ENCODE measurements at regions of chr22 and their contacts with region 1.

Region 1: DNA sequence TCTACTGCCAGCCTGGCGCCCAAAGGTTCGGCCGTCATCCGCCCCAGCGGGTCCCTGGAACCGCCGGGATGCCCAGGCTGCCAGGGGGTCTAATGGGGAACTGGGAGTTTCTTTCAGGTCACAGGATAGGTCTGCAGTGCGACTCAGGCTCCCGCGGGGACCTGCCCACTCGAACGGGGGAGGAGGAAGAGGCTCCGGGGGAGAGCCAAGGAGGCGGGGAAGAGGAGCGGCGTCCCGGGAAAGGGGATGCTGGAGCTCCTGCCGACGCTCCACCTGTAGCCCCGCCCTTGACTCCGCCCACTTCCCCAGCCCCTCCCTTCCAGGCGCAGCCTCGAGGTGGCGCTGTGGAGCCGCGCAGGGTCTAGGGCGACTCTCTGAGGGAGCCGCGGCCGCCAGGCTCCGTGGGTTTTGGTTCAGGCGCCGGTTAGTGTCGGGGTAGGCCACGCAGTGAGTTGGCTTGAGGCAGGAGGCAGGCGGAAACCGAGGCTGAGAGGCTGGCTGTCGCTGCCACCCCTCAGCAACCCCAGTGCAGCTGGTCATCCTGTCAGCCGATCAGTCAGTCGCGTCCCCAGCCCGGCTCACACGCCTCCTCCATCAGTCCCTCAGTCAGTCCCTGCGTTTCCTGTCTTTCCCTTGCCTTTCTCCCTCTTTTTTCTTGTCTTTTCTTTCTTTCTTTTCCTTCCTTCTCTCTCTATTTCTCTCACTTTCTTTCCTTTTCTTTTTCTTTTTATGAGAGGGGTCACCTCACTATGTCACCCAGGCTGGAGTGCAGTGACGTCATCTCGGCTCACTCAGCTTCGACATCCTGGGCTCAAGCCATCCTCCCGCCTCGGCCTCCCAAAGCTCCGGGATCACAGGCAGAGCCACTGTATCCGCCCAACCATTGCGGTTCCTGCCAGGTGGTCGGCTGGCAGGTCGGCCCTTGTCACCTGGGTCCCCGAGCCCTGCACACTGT is 26.4 kb downstream of the YWHAH start:
- DNase-seq: peak; percentile 85
- H3K4me3 ChIP-seq: peak overlapping the region; percentile 45 to 60 (median 57)
- H3K27ac ChIP-seq: peak overlapping the region; percentile 17
- H3K4me1 ChIP-seq: peaks cover 5% of the 10 kb centered on the region
- H3K27me3 ChIP-seq: no peaks in the 10 kb centered on the region
- CTCF ChIP-seq: peak; percentile 70 to 99

Region 2: DNA sequence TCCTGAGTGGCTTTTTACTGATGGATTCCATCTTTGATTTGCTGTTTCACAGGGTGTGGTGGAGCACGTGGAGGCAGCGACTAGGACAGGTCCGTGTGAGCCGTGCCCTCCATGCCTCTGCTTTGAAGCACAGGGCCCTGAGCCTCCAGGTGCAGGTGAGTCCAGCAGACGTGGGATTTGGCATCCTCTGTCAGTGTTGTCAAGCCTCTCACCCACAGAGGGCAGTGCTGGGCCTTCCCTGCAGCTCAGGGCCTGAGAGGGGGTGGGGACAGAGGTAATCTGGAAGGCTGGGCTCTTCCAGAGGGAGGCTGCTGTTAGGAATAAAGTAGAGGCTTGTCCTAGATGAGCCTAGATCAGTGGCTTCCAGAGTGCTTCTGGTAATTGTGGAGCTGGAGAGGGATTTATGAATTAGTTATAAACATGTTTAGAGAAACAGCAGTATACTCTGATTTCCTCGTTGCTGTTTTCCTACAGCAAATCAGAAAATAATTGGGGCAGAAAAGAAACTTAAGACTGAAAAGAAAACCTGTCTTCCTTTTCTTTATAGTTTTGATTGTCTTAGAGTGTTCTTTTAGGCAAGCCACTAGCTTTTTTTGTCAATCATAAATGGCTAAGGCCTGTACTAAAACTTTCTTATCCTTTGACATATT is 409.4 kb before region 1 on chr22:
- CTCF ChIA-PET with region 1: interaction called, 4 read pairs
- dilution Hi-C with region 1: no loop called
- in situ Hi-C with region 1: loop called in 1 of 2 experiments (anchors 25 kb)
- intact Hi-C with region 1: loop called (anchors 1 kb)
- DNase-seq: peak; percentile 70
- H3K4me3 ChIP-seq: no peak overlapping the region
- H3K27ac ChIP-seq: no peak overlapping the region
- H3K4me1 ChIP-seq: no peaks in the 10 kb centered on the region
- H3K27me3 ChIP-seq: no peaks in the 10 kb centered on the region
- CTCF ChIP-seq: peak; percentile 76 to 94

Region 3: DNA sequence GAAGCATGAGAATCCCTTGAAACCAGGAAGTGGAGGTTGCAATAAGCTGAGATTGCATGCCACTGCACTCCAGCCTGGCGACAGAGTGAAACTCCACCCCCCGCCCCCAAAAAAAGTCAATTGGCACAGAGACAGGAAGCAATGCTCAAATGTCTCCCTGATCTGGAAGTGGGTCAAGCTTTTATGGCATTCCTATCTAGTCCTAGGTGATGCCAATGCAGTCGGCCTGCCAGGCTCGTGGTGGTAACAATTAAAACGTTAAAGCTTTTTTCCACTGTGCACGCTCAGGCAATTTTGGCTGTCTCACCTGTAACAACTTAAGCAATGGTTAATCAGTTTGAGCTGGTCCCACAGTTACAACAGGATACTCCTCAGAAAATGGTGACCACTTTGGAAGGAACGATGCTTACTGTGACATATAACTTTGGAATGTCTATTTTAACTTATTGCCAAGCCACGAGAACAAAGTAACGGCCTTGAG is 289.9 kb before region 1 on chr22:
- CTCF ChIA-PET with region 1: interaction called, 10 read pairs
- dilution Hi-C with region 1: no loop called
- in situ Hi-C with region 1: no loop called
- intact Hi-C with region 1: no loop called
- DNase-seq: peak; percentile 60
- H3K4me3 ChIP-seq: no peak overlapping the region
- H3K27ac ChIP-seq: peak overlapping the region; percentile 44
- H3K4me1 ChIP-seq: peaks cover 47% of the 10 kb centered on the region
- H3K27me3 ChIP-seq: no peaks in the 10 kb centered on the region
- CTCF ChIP-seq: no peak

Region 4: GRCh38 chr22:31802575-31802974 is 168.2 kb before region 1 on chr22:
- CTCF ChIA-PET with region 1: interaction called, 13 read pairs
- dilution Hi-C with region 1: no loop called
- in situ Hi-C with region 1: no loop called
- intact Hi-C with region 1: no loop called
- DNase-seq: no peak
- H3K4me3 ChIP-seq: no peak overlapping the region
- H3K27ac ChIP-seq: no peak overlapping the region
- H3K4me1 ChIP-seq: peaks cover 4% of the 10 kb centered on the region
- H3K27me3 ChIP-seq: no peaks in the 10 kb centered on the region
- CTCF ChIP-seq: no peak

Region 5: DNA sequence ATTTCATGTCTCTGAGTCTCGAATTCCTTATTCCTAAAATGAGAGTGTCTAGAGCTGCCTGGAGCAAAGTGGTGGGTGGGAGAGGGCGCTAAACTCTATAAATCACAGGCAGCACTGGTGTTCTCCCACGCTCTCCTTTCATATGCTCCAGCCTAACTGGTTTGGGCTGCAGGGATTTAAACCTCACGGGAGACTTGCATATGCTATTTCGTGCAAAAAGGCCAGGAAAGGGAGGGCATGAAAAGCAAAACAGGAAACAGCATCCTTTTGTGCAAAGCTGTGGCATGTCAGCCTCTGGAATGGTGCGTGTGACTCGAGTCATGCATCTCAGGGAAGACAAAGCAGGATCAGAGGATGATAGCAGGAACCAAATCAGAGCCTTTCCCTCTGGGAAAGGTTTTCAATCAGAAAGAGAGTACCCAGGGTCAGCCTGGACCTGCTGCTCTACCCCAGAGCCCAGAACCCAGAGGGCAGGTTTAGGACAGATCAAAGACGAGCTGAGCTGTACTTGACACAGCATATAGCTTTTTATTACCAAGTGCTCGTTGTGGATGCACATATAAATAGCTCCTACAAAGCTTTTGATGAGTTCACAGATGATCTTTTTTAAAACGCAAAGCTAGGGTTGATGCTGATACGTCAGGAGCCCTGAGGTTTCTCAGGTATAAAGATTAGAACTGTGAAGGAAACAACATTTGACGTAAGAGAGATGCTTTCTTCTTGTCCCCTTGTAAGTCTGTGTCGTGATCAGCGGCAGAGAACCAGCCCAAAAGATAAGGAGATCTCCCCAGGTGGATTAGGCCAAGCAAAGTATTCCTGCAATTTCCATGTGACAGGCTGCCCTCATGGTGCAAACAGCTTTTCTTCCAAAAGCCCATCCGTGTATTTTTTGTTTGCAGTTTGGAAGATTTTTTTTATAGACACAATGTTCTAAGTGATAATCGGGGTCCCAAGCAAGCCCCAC is 72.6 kb before region 1 on chr22:
- CTCF ChIA-PET with region 1: no interaction called
- dilution Hi-C with region 1: no loop called
- in situ Hi-C with region 1: no loop called
- intact Hi-C with region 1: no loop called
- DNase-seq: no peak
- H3K4me3 ChIP-seq: no peak overlapping the region
- H3K27ac ChIP-seq: no peak overlapping the region
- H3K4me1 ChIP-seq: no peaks in the 10 kb centered on the region
- H3K27me3 ChIP-seq: no peaks in the 10 kb centered on the region
- CTCF ChIP-seq: no peak

Region 6: DNA sequence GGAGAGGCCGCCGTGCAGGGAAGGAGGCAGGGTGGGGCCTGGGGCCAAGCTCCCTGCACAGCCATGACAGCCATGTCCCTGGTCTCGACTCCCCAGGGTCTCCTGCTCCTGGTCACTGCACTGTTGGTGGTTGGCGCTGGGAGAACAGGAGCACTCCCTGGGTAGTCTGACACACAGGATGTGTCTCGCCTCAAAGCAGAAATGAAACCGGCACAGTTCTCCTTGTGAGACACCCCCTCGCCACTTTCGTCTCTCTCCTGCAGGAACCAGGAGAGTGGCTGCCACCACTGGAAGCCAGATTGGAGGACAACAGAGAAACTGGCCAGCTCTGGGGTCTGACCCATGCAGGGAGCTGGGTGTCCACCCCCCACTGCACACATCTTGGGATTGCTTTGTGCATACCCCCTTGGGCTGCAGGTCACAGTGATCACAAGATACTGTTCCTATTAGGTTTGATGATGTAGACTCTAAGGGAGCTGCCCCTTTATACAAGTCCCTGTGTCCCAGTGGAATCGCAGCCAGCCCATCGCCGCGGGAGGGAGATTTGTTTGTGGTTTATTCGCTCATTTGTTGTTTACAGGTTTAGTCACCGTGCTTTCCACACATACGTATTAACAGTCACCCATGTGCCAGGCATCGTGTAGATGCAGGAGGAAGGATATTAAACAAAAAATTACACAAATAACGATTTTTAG is 53.4 kb before region 1 on chr22:
- CTCF ChIA-PET with region 1: no interaction called
- dilution Hi-C with region 1: no loop called
- in situ Hi-C with region 1: no loop called
- intact Hi-C with region 1: no loop called
- DNase-seq: no peak
- H3K4me3 ChIP-seq: no peak overlapping the region
- H3K27ac ChIP-seq: no peak overlapping the region
- H3K4me1 ChIP-seq: no peaks in the 10 kb centered on the region
- H3K27me3 ChIP-seq: no peaks in the 10 kb centered on the region
- CTCF ChIP-seq: no peak

Region 7: GRCh38 chr22:31983911-31984656 is 13.3 kb after region 1 on chr22:
- CTCF ChIA-PET with region 1: no interaction called
- dilution Hi-C with region 1: no loop called
- in situ Hi-C with region 1: no loop called
- intact Hi-C with region 1: no loop called
- DNase-seq: no peak
- H3K4me3 ChIP-seq: no peak overlapping the region
- H3K27ac ChIP-seq: no peak overlapping the region
- H3K4me1 ChIP-seq: no peaks in the 10 kb centered on the region
- H3K27me3 ChIP-seq: no peaks in the 10 kb centered on the region
- CTCF ChIP-seq: no peak

Region 8: DNA sequence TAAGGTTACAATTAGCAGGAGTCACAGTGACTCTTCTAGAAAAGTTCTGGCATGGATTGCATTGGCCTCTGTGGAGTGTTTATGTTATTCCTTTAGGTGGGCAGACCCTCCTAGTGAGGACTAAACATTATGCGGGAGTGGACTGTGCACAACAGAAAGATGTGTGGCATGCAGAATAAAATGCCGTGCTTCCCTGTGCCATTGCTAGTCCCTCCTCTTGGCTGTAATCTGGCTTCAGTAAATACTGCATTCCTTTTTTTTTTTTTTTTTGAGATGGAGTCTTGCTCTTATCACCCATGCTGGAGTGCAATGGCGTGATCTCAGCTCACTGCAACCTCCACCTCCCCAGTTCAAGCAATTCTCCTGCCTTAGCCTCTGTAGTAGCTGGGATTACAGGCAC is 117.3 kb after region 1 on chr22:
- CTCF ChIA-PET with region 1: interaction called, 19 read pairs
- dilution Hi-C with region 1: no loop called
- in situ Hi-C with region 1: loop called (anchors 5 kb)
- intact Hi-C with region 1: no loop called
- DNase-seq: no peak
- H3K4me3 ChIP-seq: no peak overlapping the region
- H3K27ac ChIP-seq: no peak overlapping the region
- H3K4me1 ChIP-seq: no peaks in the 10 kb centered on the region
- H3K27me3 ChIP-seq: no peaks in the 10 kb centered on the region
- CTCF ChIP-seq: no peak